H1 (cell line): ENCODE measurements at regions of chr1 and their contacts with region 1.

Region 1: GRCh38 chr1:225766967-225767633 is 10.5 kb upstream of the SRP9 start:
- DNase-seq: no peak
- H3K4me3 ChIP-seq: no peak overlapping the region
- H3K27ac ChIP-seq: no peak overlapping the region
- H3K4me1 ChIP-seq: peaks cover 0 to 16% (median 14%) of the 10 kb centered on the region in 4 experiments; a peak in 6 of 7 replicates
- H3K27me3 ChIP-seq: no peaks in the 10 kb centered on the region; a peak in 1 of 7 replicates
- CTCF ChIP-seq: no peak
- EP300 ChIP-seq: no peak
- POLR2A ChIP-seq: no peak
- RAD21 ChIP-seq: no peak

Region 2: DNA sequence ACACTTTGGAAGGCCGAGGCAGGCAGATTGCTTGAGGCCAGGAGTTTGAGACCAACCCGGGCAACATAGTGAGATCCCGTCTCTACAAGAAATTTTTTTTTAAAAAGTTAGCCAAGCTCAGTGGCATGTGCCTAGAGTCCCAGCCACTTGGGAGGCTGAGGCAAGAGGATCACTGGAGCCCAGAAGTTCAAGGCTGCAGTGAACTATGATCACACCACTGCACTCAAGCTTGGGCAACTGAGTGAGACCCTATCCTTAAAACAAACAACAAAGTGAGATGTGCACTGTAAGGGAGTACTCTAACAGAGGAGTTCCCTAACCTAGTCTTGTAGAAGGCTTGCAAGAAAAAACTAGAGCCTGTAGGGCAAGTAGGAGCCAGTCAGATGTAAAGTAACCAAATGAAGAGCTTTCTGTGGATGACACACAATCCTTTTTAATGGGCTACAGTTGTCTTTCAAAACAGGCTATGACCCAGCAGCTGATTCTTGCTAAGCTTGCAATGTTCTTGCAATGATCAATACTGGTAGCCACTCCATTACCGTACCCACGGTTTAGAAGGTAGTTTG is 27.5 kb before region 1 on chr1:
- CTCF ChIA-PET with region 1: interaction called, 10 read pairs
- POLR2A ChIA-PET with region 1: interaction called, 3 read pairs
- DNase-seq: no peak
- H3K4me3 ChIP-seq: no peak overlapping the region
- H3K27ac ChIP-seq: no peak overlapping the region
- H3K4me1 ChIP-seq: no peaks in the 10 kb centered on the region
- H3K27me3 ChIP-seq: peaks cover 0 to 12% (median 2%) of the 10 kb centered on the region in 4 experiments; a peak in 5 of 7 replicates
- CTCF ChIP-seq: no peak
- EP300 ChIP-seq: no peak
- POLR2A ChIP-seq: no peak
- RAD21 ChIP-seq: no peak

Region 3: DNA sequence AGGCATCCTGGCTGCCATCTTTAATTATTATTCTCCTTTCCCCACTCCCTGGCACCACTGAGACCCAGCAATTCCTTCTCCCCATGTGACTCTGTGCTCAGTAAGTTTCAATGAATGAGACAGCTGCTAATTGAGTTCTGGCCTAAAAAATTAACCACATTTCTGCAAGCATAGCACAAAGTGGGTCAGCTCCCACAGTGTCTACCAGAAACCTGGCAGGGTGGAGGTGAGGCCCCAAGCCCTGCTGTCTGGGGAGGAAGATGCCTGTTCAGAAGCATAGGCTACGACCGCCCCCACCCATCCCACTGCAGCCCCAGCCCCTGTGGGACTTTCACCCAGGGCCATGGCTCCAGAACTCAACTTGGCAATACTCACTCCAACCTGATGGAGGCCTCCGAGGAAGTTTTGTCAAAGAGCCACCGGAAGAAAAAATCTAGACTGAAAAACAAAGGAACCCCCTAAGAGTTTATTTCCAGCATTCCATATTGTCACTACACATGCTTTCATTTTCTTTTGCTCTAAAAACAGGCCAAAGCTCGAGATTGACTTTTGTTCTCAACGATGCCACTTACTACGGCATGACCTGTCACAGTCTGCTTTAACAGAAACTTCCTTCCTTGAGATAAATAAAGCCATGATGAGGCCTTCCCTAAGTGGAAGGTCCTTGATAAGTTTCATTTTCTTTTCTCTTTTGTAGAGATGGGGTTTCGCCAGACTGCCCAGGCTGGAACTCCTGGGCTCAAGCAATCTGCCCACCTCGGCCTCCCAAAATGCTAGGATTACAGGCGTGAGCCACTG is 88.6 kb after region 1 on chr1:
- CTCF ChIA-PET with region 1: no interaction called
- POLR2A ChIA-PET with region 1: no interaction called
- DNase-seq: no peak
- H3K4me3 ChIP-seq: no peak overlapping the region
- H3K27ac ChIP-seq: no peak overlapping the region
- H3K4me1 ChIP-seq: no peaks in the 10 kb centered on the region; a peak in 2 of 7 replicates
- H3K27me3 ChIP-seq: no peaks in the 10 kb centered on the region
- CTCF ChIP-seq: no peak; a peak in 1 of 4 replicates
- EP300 ChIP-seq: no peak
- POLR2A ChIP-seq: no peak
- RAD21 ChIP-seq: peak in 1 of 2 experiments; percentile 29; a peak in 1 of 4 replicates

Region 4: DNA sequence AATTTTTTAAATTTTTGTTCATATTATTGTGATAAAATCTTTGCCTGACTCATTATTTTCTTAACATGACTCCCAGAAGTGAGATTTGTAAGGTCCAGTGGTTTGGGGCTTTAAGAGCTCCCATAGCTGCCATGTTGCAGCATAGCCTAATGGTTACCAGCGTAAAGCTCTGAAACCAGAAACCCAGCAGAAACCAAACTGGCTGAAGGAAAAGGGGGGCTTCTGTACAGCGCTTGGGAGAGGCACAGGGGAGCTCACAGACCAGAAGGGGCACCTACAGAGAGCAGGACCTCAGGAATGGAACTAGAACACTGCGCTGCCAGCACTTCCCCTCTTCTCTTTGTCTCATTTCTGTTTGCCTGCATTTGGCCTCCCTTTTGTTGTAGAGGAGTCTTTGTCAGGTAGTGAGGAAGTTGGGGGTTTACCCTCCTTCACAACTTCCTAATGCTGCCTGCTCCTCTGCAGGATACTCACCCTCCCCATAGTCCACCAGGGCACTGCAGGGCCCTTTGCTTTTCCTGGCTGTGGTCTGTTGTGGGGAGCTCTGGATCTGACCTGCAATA is 159.5 kb after region 1 on chr1:
- CTCF ChIA-PET with region 1: no interaction called
- POLR2A ChIA-PET with region 1: no interaction called
- DNase-seq: no peak
- H3K4me3 ChIP-seq: no peak overlapping the region
- H3K27ac ChIP-seq: no peak overlapping the region
- H3K4me1 ChIP-seq: peaks cover 0 to 9% (median 5%) of the 10 kb centered on the region in 4 experiments; a peak in 4 of 7 replicates
- H3K27me3 ChIP-seq: no peaks in the 10 kb centered on the region
- CTCF ChIP-seq: no peak
- EP300 ChIP-seq: no peak
- POLR2A ChIP-seq: no peak
- RAD21 ChIP-seq: no peak